Heart right ventricle (tissue), 16 donors: ENCODE measurements at regions of chr22 and their contacts with region 1.

Region 1: GRCh38 chr22:26756675-26757293 is 99.4 kb downstream of the MIAT start:
- DNase-seq: peak; percentile 48 to 70
- ATAC-seq: peak; percentile 78 to 92 (median 86)
- H3K4me3 ChIP-seq: peak overlapping the region in 8 of 10 donors; percentile 12 to 38 (median 35)
- H3K27ac ChIP-seq: no peak overlapping the region
- H3K4me1 ChIP-seq: no peaks in the 10 kb centered on the region
- H3K27me3 ChIP-seq: no peaks in the 10 kb centered on the region
- CTCF ChIP-seq: peak; percentile 87 to 95 (median 91)

Region 2: GRCh38 chr22:26428515-26429457 is 328.0 kb before region 1 on chr22 and contains the start of gene ASPHD2:
- intact Hi-C with region 1: no loop called
- DNase-seq: peak; percentile 26 to 54
- ATAC-seq: peak; percentile 63 to 83 (median 71)
- H3K4me3 ChIP-seq: peak within 1 kb of the TSS; percentile 26 to 69 (median 58)
- H3K27ac ChIP-seq: peak within 1 kb of the TSS in 8 of 10 donors; percentile 18 to 92 (median 54)
- H3K4me1 ChIP-seq: peaks cover 0 to 33% (median 0%) of the 10 kb centered on the region in 9 donors
- H3K27me3 ChIP-seq: peaks cover 0 to 34% (median 17%) of the 10 kb centered on the region in 7 donors
- CTCF ChIP-seq: no peak
- total RNA-seq, gene ASPHD2: 0.07 to 1.8 (median 0.13) TPM in 8 of 10 donors, not detected in the others

Region 3: DNA sequence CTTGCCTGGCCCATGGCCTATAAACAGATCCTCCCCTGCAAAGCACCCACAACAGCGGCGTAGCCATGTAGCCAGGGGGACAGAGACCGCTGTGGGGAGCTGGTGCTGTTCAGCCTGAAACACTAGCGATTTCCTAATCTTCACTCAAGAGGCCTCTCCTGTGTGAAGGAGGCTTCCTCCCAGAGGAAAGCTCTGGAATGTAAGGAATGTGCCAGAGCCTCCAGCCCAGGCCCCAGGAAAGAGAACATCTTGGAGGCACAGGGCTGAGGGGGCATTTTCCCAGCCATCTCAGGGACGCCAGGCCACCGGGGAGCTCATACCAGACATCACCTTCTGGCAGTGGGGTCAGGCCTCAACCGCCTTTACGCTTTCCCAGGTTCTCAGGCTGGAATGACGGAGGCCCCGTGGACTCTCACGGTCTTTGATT is 75.4 kb before region 1 on chr22:
- intact Hi-C with region 1: loop called in 1 of 10 experiments (anchors 10 kb)
- DNase-seq: no peak
- ATAC-seq: peak in 1 of 8 donors; percentile 46
- H3K4me3 ChIP-seq: no peak overlapping the region
- H3K27ac ChIP-seq: no peak overlapping the region
- H3K4me1 ChIP-seq: peaks cover 0 to 17% (median 0%) of the 10 kb centered on the region in 9 donors
- H3K27me3 ChIP-seq: no peaks in the 10 kb centered on the region
- CTCF ChIP-seq: no peak

Region 4: DNA sequence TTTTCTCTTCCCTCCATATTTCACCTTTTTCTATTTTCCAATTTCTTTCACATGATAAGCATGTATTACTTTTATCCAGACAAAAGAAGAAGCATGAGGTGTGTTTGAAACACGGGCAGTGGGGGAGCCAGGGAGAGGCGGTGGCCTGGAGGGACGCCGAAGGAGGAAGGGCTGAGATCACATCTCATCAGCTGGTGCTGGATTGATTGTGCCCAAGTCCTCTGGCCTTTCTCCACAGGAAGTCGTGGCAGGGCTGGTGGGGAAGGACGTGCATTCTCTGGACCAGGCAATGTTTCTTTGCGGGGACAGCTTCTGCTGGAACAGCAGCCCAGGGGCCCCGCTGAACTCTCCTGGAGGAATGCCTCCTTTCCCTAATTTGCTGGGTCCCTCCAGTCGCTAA is 16.5 kb before region 1 on chr22:
- intact Hi-C with region 1: no loop called
- DNase-seq: no peak
- ATAC-seq: peak in 1 of 8 donors; percentile 33
- H3K4me3 ChIP-seq: no peak overlapping the region
- H3K27ac ChIP-seq: no peak overlapping the region
- H3K4me1 ChIP-seq: peaks cover 0 to 4% (median 0%) of the 10 kb centered on the region in 9 donors
- H3K27me3 ChIP-seq: no peaks in the 10 kb centered on the region
- CTCF ChIP-seq: no peak

Region 5: GRCh38 chr22:26892166-26893041 is 135.6 kb after region 1 on chr22:
- intact Hi-C with region 1: no loop called
- DNase-seq: no peak
- ATAC-seq: no peak
- H3K4me3 ChIP-seq: no peak overlapping the region
- H3K27ac ChIP-seq: no peak overlapping the region
- H3K4me1 ChIP-seq: peaks cover 0 to 6% (median 3%) of the 10 kb centered on the region in 9 donors
- H3K27me3 ChIP-seq: no peaks in the 10 kb centered on the region
- CTCF ChIP-seq: no peak

Region 6: DNA sequence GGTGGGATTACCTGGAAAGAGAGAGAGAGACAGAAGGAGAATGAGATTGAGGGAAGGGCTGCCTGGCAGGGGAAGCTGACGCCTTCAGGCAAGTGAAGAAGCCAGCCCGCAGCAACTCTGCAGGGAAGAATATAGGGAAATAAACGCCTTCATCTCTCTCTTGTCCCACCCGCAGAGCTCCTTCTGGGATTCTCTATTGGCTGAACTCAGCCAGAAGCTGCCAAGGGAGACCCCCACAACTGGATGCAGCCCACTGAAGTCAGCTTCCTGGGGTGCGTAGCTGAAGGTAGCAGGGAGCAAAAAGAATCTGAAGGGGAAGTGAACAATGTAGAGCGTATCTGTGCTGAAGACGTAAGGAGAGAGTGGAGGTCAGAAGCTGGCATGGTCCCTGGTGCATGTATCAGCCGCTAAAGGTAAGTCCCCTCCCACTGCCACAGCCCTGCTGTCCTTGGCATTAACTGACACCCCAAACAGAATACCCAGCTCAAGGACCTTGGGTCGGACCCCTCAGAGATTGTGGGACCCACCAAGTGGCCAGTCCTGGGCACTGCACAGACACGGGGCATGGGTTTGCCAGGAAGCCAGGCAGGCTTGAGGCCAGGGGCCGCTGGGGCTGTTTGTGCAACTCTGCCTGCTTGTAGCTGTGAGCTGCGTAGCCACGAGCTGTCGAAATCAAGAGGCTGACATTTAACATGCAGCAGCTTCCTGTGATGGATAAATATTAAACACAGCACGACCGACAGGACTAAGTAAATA is 574.9 kb after region 1 on chr22:
- intact Hi-C with region 1: loop called in 2 of 10 experiments (anchors 10 kb)
- DNase-seq: peak; percentile 26 to 64
- ATAC-seq: peak; percentile 54 to 96 (median 83)
- H3K4me3 ChIP-seq: no peak overlapping the region
- H3K27ac ChIP-seq: no peak overlapping the region
- H3K4me1 ChIP-seq: peaks cover 0 to 9% (median 0%) of the 10 kb centered on the region in 9 donors
- H3K27me3 ChIP-seq: peaks cover 0 to 57% (median 36%) of the 10 kb centered on the region in 7 donors
- CTCF ChIP-seq: peak in 6 of 9 donors; percentile 32 to 53 (median 44)

Region 7: DNA sequence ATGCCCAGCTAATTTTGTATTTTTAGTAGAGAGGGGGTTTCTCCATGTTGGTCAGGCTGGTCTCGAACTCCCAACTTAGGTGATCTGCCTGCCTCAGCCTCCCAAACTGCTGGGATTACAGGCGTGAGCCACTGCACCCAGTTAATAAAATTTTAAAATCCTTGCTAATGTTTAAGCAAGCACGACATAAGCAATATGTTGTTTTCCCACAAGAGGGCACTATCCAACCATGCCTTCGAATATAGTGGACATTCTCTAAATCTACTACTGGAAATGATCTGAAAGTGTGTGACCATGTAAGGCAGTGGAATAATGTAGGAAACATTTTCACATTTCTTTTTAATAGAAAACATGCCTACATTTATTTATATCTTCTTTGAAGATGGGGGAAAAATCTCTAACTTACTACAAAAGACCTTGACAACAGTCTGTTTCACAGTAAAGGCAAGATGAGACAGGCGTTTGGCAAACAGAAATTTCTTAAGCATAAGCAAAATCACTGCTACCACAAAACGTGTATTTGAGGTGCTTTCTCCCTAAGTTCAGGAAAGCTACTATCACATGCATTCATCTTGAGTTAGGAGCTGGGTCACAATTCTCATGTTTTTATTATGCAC is 1124.1 kb after region 1 on chr22:
- intact Hi-C with region 1: loop called in 1 of 10 experiments (anchors 5 kb)
- DNase-seq: peak in 1 of 2 donors; percentile 68
- ATAC-seq: peak; percentile 58 to 89 (median 80)
- H3K4me3 ChIP-seq: no peak overlapping the region
- H3K27ac ChIP-seq: peak overlapping the region in 7 of 10 donors; percentile 10 to 46 (median 33)
- H3K4me1 ChIP-seq: peaks cover 3 to 77% (median 67%) of the 10 kb centered on the region in 9 donors
- H3K27me3 ChIP-seq: no peaks in the 10 kb centered on the region
- CTCF ChIP-seq: peak; percentile 76 to 87 (median 83)

Region 8: GRCh38 chr22:28009272-28009827 is 1252.6 kb after region 1 on chr22:
- intact Hi-C with region 1: loop called in 4 of 10 experiments (anchors 2 to 10 kb)
- DNase-seq: peak; percentile 75 to 77
- ATAC-seq: peak; percentile 73 to 83 (median 78)
- H3K4me3 ChIP-seq: no peak overlapping the region
- H3K27ac ChIP-seq: no peak overlapping the region
- H3K4me1 ChIP-seq: peaks cover 0 to 30% (median 17%) of the 10 kb centered on the region in 9 donors
- H3K27me3 ChIP-seq: no peaks in the 10 kb centered on the region
- CTCF ChIP-seq: peak; percentile 86 to 99 (median 98)

Region 9: GRCh38 chr22:28019881-28020871 is 1263.4 kb after region 1 on chr22:
- intact Hi-C with region 1: loop called in 1 of 10 experiments (anchors 10 kb)
- DNase-seq: peak; percentile 74 to 78
- ATAC-seq: peak; percentile 69 to 83 (median 74)
- H3K4me3 ChIP-seq: no peak overlapping the region
- H3K27ac ChIP-seq: peak overlapping the region in 1 of 10 donors; percentile 1
- H3K4me1 ChIP-seq: peaks cover 6 to 58% (median 23%) of the 10 kb centered on the region in 9 donors
- H3K27me3 ChIP-seq: no peaks in the 10 kb centered on the region
- CTCF ChIP-seq: peak; percentile 85 to 98 (median 96)